ENCODE measurements at regions of chr9 and their contacts with region 1.

Region 1: GRCh38 chr9:21455320-21455719 is 15.1 kb downstream of the IFNA1 start:
- DNase-seq: peak in 19 of 35 experiments; percentile 2 to 62 (median 10)
- ATAC-seq: peak; percentile 63 to 87 (median 70)
- H3K4me3 ChIP-seq: no peak overlapping the region
- H3K4me3 Mint-ChIP-seq: no peak overlapping the region
- H3K27ac ChIP-seq: no peak overlapping the region
- H3K27ac Mint-ChIP-seq: no peak overlapping the region
- H3K4me1 ChIP-seq: no peaks in the 10 kb centered on the region
- H3K4me1 Mint-ChIP-seq: peaks cover 0 to 2% (median 0%) of the 10 kb centered on the region in 3 donors
- H3K27me3 ChIP-seq: no peaks in the 10 kb centered on the region
- H3K27me3 Mint-ChIP-seq: peaks cover 7 to 32% of the 10 kb centered on the region in 2 donors

Region 2: DNA sequence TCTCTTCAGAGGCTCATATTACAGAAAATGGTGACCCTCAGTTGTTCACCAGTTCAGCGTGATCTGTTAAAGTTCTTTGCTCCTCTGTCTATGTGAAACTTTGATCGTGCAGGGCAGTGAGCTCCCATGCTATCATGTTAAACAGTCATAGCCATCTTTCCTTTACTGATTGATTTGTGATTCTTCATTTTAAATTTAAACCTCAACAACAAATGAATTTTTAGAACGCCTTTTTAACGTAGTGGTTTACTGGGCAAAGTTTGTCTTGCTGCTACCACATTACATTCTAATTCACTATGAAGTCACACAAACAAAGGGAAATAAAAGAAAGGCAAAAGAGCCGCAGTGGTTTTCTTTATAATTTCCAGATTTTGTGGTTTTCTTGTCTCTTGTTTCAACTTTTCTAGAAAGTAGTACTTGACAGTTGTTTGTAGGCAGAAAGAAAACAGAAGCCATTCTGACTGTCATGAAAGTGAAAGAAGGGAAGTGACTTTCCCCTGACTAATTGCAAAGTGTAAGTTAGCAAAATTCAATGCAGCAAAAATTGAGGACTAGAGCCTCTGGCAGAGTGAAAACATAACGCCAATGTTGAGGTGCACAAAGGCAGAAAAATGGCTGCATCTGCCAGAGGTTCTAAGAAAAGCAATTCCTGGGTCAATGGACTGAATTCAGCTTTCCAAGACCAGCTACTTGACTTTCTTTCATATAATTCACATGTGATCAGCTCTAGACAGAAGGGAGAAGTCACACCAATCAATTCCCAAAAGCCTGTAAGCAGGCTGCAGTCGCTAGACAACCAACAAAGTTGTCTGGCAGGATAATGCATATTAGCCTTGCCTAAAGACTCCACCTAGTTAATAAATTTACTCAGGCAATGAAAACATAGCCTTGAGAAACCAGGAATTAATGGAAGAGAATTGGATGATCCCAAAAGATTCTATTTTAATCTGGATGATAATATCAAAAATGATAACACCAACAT is 97.5 kb before region 1 on chr9:
- CTCF ChIA-PET with region 1: no interaction called
- POLR2A ChIA-PET with region 1: no interaction called
- DNase-seq: peak in 1 of 35 experiments; percentile 35
- ATAC-seq: peak; percentile 76 to 83 (median 82)
- H3K4me3 ChIP-seq: peak overlapping the region; percentile 10 to 16
- H3K4me3 Mint-ChIP-seq: peak overlapping the region; percentile 40 to 70 (median 62)
- H3K27ac ChIP-seq: peak overlapping the region; percentile 61
- H3K27ac Mint-ChIP-seq: peak overlapping the region; percentile 87 to 95
- H3K4me1 ChIP-seq: peaks cover 5 to 7% of the 10 kb centered on the region in 2 experiments
- H3K4me1 Mint-ChIP-seq: peaks cover 19 to 23% (median 21%) of the 10 kb centered on the region in 3 donors
- H3K27me3 ChIP-seq: peaks cover 0 to 3% of the 10 kb centered on the region in 2 experiments
- H3K27me3 Mint-ChIP-seq: peaks cover 6% of the 10 kb centered on the region in 2 donors

Region 3: GRCh38 chr9:21434202-21435014 is 20.9 kb before region 1 on chr9:
- CTCF ChIA-PET with region 1: interaction called, 8 to 34 read pairs
- POLR2A ChIA-PET with region 1: no interaction called
- DNase-seq: peak in 27 of 35 experiments; percentile 13 to 71 (median 34)
- ATAC-seq: peak in 1 of 4 experiments; percentile 35
- H3K4me3 ChIP-seq: no peak overlapping the region
- H3K4me3 Mint-ChIP-seq: no peak overlapping the region
- H3K27ac ChIP-seq: no peak overlapping the region
- H3K27ac Mint-ChIP-seq: no peak overlapping the region
- H3K4me1 ChIP-seq: no peaks in the 10 kb centered on the region
- H3K4me1 Mint-ChIP-seq: no peaks in the 10 kb centered on the region
- H3K27me3 ChIP-seq: peaks cover 0 to 12% of the 10 kb centered on the region in 2 experiments
- H3K27me3 Mint-ChIP-seq: peaks cover 25 to 27% of the 10 kb centered on the region in 2 donors